ENCODE measurements at regions of chr11 and their contacts with region 1.

Region 1: GRCh38 chr11:44621140-44621681 is 55.7 kb downstream of the CD82 start:
- DNase-seq: peak; percentile 70
- ATAC-seq: peak; percentile 53
- H3K4me3 ChIP-seq: no peak overlapping the region
- H3K4me3 Mint-ChIP-seq: no peak overlapping the region
- H3K27ac ChIP-seq: no peak overlapping the region
- H3K27ac Mint-ChIP-seq: peak overlapping the region; percentile 50
- H3K4me1 ChIP-seq: peaks cover 20 to 30% of the 10 kb centered on the region in 2 donors
- H3K4me1 Mint-ChIP-seq: peaks cover 73% of the 10 kb centered on the region
- H3K27me3 ChIP-seq: no peaks in the 10 kb centered on the region
- H3K27me3 Mint-ChIP-seq: no peaks in the 10 kb centered on the region
- CTCF ChIP-seq: peak; percentile 81

Region 2: DNA sequence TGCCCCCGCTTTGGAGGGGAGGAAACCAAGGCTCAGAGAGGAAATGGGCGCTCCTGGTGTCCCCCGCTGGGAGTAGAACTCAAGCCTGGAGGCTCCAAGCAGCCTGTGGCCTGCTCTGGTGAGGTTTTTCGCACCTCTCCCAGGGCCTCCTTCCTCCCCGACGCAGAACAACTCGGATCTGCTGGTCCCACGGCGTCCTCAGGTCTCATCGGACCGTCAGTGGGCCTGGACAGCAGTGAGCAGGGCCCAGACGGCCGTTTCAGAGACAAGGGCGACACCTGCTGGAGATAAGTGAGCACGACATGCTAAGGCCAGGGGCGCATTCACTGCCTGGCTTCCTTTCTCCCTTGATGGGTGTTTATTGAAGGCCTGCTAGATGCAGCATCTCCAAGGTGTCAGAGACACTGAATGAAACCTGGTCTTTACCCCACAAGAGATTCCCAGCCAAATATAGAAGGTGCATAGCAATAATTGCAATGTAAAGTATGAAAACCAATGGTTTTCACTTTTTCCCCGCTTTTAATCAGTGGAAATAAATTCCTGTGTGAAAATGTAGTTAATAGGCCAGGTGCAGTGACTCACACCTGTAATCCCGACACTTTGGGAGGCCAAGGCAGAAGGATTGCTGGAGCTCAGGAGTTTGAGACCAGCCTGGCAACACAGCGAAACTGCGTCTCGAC is 82.7 kb before region 1 on chr11:
- CTCF ChIA-PET with region 1: interaction called, 47 read pairs
- POLR2A ChIA-PET with region 1: no interaction called
- intact Hi-C with region 1: no loop called
- DNase-seq: peak; percentile 81
- ATAC-seq: peak; percentile 93
- H3K4me3 ChIP-seq: no peak overlapping the region
- H3K4me3 Mint-ChIP-seq: no peak overlapping the region
- H3K27ac ChIP-seq: no peak overlapping the region
- H3K27ac Mint-ChIP-seq: no peak overlapping the region
- H3K4me1 ChIP-seq: peaks cover 0 to 6% of the 10 kb centered on the region in 2 donors
- H3K4me1 Mint-ChIP-seq: peaks cover 5% of the 10 kb centered on the region
- H3K27me3 ChIP-seq: peaks cover 0 to 16% (median 2%) of the 10 kb centered on the region in 4 experiments
- H3K27me3 Mint-ChIP-seq: peaks cover 17% of the 10 kb centered on the region
- CTCF ChIP-seq: peak; percentile 100

Region 3: DNA sequence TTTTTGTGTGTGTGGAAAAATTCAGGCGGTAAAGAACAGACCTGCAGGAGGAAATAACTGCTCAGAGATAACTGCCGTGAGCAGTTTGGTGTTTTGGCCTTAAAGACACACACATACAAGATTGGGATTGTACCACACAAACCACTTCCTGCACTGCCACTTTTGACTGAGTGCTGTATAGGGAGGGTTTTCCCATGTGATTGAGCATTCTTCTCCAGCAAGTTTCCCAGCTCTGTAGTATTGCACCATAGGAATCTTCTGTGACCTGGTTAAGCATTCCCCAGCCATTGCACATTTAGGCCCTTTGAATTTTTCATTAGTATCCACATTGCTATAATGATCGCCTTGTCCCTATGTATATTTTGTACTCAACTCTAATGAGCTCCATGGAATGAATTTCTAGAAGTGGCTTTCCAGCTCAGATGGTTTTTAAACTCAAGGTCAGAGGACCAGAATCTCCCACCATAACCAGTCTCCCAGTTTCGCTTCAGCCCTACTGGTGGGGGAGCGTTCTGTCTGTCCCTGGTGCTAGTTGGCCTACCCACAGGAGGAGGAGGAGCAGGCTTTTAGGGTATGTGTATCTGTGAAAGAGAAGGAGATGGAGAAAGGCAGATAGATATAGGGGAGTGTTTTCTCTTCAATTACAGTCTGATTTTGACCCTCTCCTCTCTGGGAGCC is 46.5 kb before region 1 on chr11:
- CTCF ChIA-PET with region 1: interaction called, 26 read pairs
- POLR2A ChIA-PET with region 1: interaction called, 7 read pairs
- intact Hi-C with region 1: no loop called
- DNase-seq: no peak
- ATAC-seq: peak; percentile 22
- H3K4me3 ChIP-seq: no peak overlapping the region
- H3K4me3 Mint-ChIP-seq: peak overlapping the region; percentile 73
- H3K27ac ChIP-seq: peak overlapping the region in 1 of 2 donors; percentile 63
- H3K27ac Mint-ChIP-seq: peak overlapping the region; percentile 54
- H3K4me1 ChIP-seq: peaks cover 91 to 99% of the 10 kb centered on the region in 2 donors
- H3K4me1 Mint-ChIP-seq: peaks cover 96% of the 10 kb centered on the region
- H3K27me3 ChIP-seq: no peaks in the 10 kb centered on the region
- H3K27me3 Mint-ChIP-seq: no peaks in the 10 kb centered on the region
- CTCF ChIP-seq: no peak

Region 4: GRCh38 chr11:44582636-44583035 is 38.6 kb before region 1 on chr11:
- CTCF ChIA-PET with region 1: interaction called, 16 read pairs
- POLR2A ChIA-PET with region 1: no interaction called
- intact Hi-C with region 1: no loop called
- DNase-seq: no peak
- ATAC-seq: no peak
- H3K4me3 ChIP-seq: no peak overlapping the region
- H3K4me3 Mint-ChIP-seq: no peak overlapping the region
- H3K27ac ChIP-seq: peak overlapping the region in 1 of 2 donors; percentile 46
- H3K27ac Mint-ChIP-seq: peak overlapping the region; percentile 63
- H3K4me1 ChIP-seq: peaks cover 22 to 40% of the 10 kb centered on the region in 2 donors
- H3K4me1 Mint-ChIP-seq: peaks cover 65% of the 10 kb centered on the region
- H3K27me3 ChIP-seq: no peaks in the 10 kb centered on the region
- H3K27me3 Mint-ChIP-seq: no peaks in the 10 kb centered on the region
- CTCF ChIP-seq: no peak

Region 5: GRCh38 chr11:44702889-44703288 is 81.7 kb after region 1 on chr11:
- CTCF ChIA-PET with region 1: no interaction called
- POLR2A ChIA-PET with region 1: no interaction called
- intact Hi-C with region 1: no loop called
- DNase-seq: no peak
- ATAC-seq: no peak
- H3K4me3 ChIP-seq: no peak overlapping the region
- H3K4me3 Mint-ChIP-seq: no peak overlapping the region
- H3K27ac ChIP-seq: no peak overlapping the region
- H3K27ac Mint-ChIP-seq: no peak overlapping the region
- H3K4me1 ChIP-seq: no peaks in the 10 kb centered on the region
- H3K4me1 Mint-ChIP-seq: no peaks in the 10 kb centered on the region
- H3K27me3 ChIP-seq: peaks cover 0 to 9% (median 1%) of the 10 kb centered on the region in 4 experiments
- H3K27me3 Mint-ChIP-seq: peaks cover 34% of the 10 kb centered on the region
- CTCF ChIP-seq: no peak